ENCODE measurements at regions of chr1 and their contacts with region 1.

Region 1: GRCh38 chr1:150186789-150187559 is 37.3 kb downstream of the PLEKHO1 start:
- DNase-seq: peak; percentile 74
- H3K4me3 Mint-ChIP-seq: no peak overlapping the region
- H3K27ac Mint-ChIP-seq: no peak overlapping the region
- H3K4me1 Mint-ChIP-seq: peaks cover 9% of the 10 kb centered on the region
- H3K27me3 Mint-ChIP-seq: no peaks in the 10 kb centered on the region
- CTCF ChIP-seq: peak; percentile 67

Region 2: DNA sequence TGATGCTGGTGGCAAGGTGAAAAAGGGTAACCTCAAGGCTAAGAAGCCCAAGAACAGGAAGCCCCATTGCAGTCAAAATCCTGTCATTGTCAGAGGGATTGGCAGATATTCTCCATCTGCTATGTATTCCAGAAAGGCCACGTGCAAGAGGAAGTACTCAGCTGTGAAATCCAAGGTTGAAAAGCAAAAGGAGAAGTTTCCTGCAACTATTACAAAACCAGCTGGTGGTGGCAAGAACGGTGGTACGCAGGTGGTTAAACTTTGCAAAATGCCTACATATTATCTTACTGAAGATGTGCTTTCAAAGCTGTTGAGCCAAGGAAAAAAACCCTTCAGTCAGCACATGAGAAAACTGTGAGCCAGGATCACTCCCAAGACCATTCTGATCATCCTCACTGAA is 133.0 kb before region 1 on chr1:
- CTCF ChIA-PET with region 1: interaction called, 10 read pairs
- POLR2A ChIA-PET with region 1: no interaction called
- intact Hi-C with region 1: no loop called
- DNase-seq: no peak
- H3K4me3 Mint-ChIP-seq: no peak overlapping the region
- H3K27ac Mint-ChIP-seq: no peak overlapping the region
- H3K4me1 Mint-ChIP-seq: peaks cover 7% of the 10 kb centered on the region
- H3K27me3 Mint-ChIP-seq: no peaks in the 10 kb centered on the region
- CTCF ChIP-seq: no peak

Region 3: GRCh38 chr1:150072959-150073358 is 114.0 kb before region 1 on chr1:
- CTCF ChIA-PET with region 1: interaction called, 159 read pairs
- POLR2A ChIA-PET with region 1: interaction called, 43 read pairs
- intact Hi-C with region 1: loop called (anchors 1 kb)
- DNase-seq: peak; percentile 27
- H3K4me3 Mint-ChIP-seq: no peak overlapping the region
- H3K27ac Mint-ChIP-seq: peak overlapping the region; percentile 7
- H3K4me1 Mint-ChIP-seq: peaks cover 20% of the 10 kb centered on the region
- H3K27me3 Mint-ChIP-seq: no peaks in the 10 kb centered on the region
- CTCF ChIP-seq: peak; percentile 61

Region 4: DNA sequence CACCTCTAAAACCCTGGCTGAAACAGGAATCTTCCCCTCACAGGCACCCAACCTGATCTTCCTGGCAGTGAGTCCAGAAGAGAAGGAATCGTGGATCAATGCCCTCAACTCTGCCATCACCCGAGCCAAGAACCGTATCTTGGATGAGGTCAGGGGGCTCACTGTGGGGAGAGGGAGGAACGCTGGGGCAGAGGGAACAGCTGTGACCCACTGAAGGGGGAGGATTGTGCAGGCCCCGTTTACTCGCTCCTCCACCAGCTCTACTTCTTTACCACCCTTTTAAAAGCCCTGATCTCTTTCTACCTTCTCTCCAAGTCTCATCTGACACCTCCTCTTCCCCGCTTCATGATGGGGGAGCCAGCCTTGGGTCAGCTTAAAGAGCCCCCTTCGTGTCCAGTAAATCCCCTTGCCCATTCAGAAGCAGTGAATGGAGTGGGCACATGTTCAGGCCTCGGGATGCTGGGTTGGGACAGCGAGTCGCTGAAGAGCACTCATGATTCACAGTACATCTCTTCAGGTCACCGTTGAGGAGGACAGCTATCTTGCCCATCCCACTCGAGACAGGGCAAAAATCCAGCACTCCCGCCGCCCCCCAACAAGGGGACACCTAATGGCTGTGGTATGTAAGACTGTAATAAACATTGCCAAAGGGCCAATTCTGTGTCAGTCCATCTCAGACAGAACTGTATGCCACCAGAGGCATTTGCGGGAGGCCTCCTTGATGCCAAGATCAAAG is 29.9 kb before region 1 on chr1:
- CTCF ChIA-PET with region 1: interaction called, 223 read pairs
- POLR2A ChIA-PET with region 1: interaction called, 5 read pairs
- intact Hi-C with region 1: no loop called
- DNase-seq: no peak
- H3K4me3 Mint-ChIP-seq: no peak overlapping the region
- H3K27ac Mint-ChIP-seq: no peak overlapping the region
- H3K4me1 Mint-ChIP-seq: no peaks in the 10 kb centered on the region
- H3K27me3 Mint-ChIP-seq: no peaks in the 10 kb centered on the region
- CTCF ChIP-seq: no peak

Region 5: DNA sequence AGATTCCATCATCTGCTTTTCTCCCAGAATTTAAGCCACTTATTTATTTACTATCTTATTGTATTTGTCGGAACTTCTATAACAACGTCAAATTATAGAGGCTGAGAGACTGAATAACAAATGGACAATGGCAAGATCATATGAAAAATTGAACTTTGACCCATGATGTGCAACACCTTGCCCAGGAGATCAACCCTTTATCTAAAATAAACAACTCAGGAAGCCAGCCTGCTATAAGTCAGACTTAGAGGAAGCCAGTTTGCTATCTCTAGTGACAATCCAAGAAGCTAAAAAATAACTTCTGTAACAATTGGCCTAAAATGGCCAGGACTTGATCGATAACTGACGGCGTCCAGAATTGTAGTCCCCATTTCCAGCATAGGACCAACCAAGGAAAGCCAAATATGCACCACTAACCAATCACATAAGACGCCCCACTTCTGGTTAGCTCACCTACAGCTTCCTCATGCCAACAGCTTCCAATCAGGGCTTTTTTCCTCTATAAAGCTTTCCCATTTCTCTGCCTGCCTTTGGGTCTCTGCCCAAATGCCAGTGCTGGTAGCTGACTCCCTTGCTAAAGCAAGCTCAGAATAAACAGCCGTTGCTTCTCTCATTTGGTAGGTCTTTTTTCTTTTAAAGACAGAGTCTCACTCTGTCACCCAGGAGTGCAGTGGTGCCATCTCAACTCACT is 20.5 kb after region 1 on chr1:
- CTCF ChIA-PET with region 1: interaction called, 15 read pairs
- POLR2A ChIA-PET with region 1: interaction called, 4 read pairs
- intact Hi-C with region 1: no loop called
- DNase-seq: no peak
- H3K4me3 Mint-ChIP-seq: no peak overlapping the region
- H3K27ac Mint-ChIP-seq: no peak overlapping the region
- H3K4me1 Mint-ChIP-seq: no peaks in the 10 kb centered on the region
- H3K27me3 Mint-ChIP-seq: no peaks in the 10 kb centered on the region
- CTCF ChIP-seq: no peak

Region 6: GRCh38 chr1:150273311-150273710 is 86.3 kb after region 1 on chr1:
- CTCF ChIA-PET with region 1: no interaction called
- POLR2A ChIA-PET with region 1: no interaction called
- intact Hi-C with region 1: no loop called
- DNase-seq: no peak
- H3K4me3 Mint-ChIP-seq: no peak overlapping the region
- H3K27ac Mint-ChIP-seq: no peak overlapping the region
- H3K4me1 Mint-ChIP-seq: peaks cover 19% of the 10 kb centered on the region
- H3K27me3 Mint-ChIP-seq: no peaks in the 10 kb centered on the region
- CTCF ChIP-seq: no peak

Region 7: DNA sequence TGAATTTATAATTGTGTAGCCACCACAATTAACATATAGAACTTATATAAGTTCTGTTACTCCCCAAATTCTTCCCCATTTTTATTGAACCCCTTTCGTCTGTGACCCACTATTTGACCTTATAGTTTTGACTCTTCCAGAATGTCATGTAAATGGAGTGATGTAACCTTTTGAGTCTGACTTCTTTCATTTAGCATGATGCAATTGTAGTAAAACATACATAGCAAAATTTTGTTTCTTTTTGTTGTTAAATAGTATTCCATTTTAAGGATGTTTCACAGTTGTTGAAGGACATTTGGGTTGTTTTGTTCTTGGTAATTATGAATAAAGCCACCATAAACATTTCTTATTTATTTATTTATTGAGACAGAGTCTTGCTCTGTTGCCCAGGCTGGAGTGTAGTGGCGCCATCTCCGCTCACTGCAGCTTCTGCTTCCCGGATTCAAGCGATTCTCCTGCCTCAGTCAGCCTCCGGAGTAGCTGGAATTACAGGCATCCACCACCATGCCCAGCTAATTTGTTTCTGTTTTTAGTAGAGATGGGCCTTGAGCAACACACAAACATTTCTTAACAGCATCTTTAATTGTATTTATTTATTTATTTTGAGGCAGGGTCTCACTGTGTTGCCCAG is 210.5 kb after region 1 on chr1:
- CTCF ChIA-PET with region 1: no interaction called
- POLR2A ChIA-PET with region 1: no interaction called
- intact Hi-C with region 1: no loop called
- DNase-seq: no peak
- H3K4me3 Mint-ChIP-seq: no peak overlapping the region
- H3K27ac Mint-ChIP-seq: no peak overlapping the region
- H3K4me1 Mint-ChIP-seq: peaks cover 6% of the 10 kb centered on the region
- H3K27me3 Mint-ChIP-seq: no peaks in the 10 kb centered on the region
- CTCF ChIP-seq: no peak

Region 8: GRCh38 chr1:151384584-151384983 is 1197.6 kb after region 1 on chr1:
- CTCF ChIA-PET with region 1: no interaction called
- POLR2A ChIA-PET with region 1: no interaction called
- intact Hi-C with region 1: no loop called
- DNase-seq: no peak
- H3K4me3 Mint-ChIP-seq: no peak overlapping the region
- H3K27ac Mint-ChIP-seq: no peak overlapping the region
- H3K4me1 Mint-ChIP-seq: no peaks in the 10 kb centered on the region
- H3K27me3 Mint-ChIP-seq: no peaks in the 10 kb centered on the region
- CTCF ChIP-seq: no peak